ENCODE measurements at regions of chr20 and their contacts with region 1.

Region 1: GRCh38 chr20:15081261-15081660 is 743.8 kb upstream of the FLRT3 start:
- DNase-seq: no peak
- ATAC-seq: no peak
- H3K4me3 ChIP-seq: no peak overlapping the region
- H3K27ac ChIP-seq: no peak overlapping the region
- H3K4me1 ChIP-seq: no peaks in the 10 kb centered on the region
- H3K27me3 ChIP-seq: no peaks in the 10 kb centered on the region
- CTCF ChIP-seq: no peak
- POLR2A ChIP-seq: no peak
- RAD21 ChIP-seq: no peak

Region 2: DNA sequence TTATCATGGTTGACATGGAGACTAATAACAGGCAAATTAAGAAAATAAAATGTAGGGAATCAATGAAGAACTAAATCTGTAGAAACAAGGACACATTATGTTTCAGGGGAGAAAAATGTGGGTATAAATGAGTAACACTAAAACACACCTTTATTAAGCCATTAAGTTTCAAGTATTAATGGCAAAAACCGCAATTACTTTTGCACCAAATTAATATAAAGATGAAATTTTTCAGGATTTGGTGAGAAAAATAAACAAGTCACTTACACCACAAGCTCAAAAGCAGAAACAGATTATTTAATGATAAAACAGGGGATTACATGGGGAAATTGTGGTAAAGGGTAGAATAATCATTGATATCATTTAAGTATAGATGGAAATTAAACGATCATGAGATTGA is 49.9 kb after region 1 on chr20:
- CTCF ChIA-PET with region 1: no interaction called
- POLR2A ChIA-PET with region 1: no interaction called
- dilution Hi-C with region 1: no loop called
- in situ Hi-C with region 1: no loop called
- intact Hi-C with region 1: no loop called
- DNase-seq: no peak
- ATAC-seq: no peak
- H3K4me3 ChIP-seq: no peak overlapping the region
- H3K27ac ChIP-seq: no peak overlapping the region
- H3K4me1 ChIP-seq: no peaks in the 10 kb centered on the region
- H3K27me3 ChIP-seq: no peaks in the 10 kb centered on the region
- CTCF ChIP-seq: no peak
- POLR2A ChIP-seq: no peak
- RAD21 ChIP-seq: no peak

Region 3: DNA sequence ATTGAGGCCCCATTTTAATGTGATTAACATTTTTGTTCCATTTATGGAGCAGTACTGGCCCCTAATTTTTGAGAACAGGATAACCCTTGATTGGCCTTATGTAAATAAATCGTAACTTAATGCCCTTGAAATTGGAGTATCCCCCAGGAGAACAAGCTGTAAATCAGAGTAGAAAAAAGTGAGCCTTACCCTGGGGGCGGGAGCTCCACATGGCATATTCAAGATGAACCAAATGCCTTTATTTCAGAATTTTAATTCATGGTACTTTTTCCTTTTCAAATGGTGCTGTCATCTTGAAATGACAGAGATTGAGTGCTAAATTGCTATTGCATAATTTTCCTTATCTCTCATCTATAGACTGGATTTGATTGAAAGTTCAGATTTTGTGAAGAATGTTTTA is 65.7 kb after region 1 on chr20:
- CTCF ChIA-PET with region 1: no interaction called
- POLR2A ChIA-PET with region 1: no interaction called
- dilution Hi-C with region 1: no loop called
- in situ Hi-C with region 1: no loop called
- intact Hi-C with region 1: no loop called
- DNase-seq: no peak
- ATAC-seq: no peak
- H3K4me3 ChIP-seq: no peak overlapping the region
- H3K27ac ChIP-seq: no peak overlapping the region
- H3K4me1 ChIP-seq: no peaks in the 10 kb centered on the region
- H3K27me3 ChIP-seq: no peaks in the 10 kb centered on the region
- CTCF ChIP-seq: no peak
- POLR2A ChIP-seq: no peak
- RAD21 ChIP-seq: no peak

Region 4: DNA sequence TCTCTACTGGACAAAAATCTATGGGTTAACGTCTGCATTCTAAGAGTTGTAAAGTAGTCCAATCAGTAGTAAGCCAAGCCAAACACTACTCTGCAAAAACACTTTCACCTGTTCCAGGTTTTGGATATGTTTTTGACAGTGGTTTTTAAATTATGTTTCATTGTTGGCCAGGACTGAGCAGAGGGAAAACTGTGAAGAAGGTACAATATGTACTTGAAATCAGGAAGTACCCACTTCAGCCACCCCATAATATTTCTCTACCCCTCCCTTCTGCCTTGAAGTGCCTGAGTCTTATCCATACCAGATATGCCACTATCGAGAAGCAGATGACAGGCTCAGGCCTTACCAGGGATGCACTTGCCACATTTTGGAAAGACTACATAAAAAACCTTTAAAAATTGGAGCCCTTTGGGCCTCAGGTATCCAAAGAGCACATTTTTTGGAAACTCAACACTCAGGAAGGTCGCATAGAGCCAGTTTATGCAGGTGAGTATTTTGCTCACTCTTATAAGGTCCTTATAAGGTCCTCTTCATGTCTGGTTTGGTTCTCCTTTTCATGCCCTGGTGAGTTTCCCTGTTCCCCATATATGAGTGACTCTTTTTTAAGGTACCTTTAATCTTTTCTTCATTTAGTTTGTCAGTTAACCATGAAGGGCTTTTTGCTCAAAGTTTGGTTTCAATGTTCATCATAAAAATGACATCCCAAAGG is 115.4 kb after region 1 on chr20:
- CTCF ChIA-PET with region 1: no interaction called
- POLR2A ChIA-PET with region 1: no interaction called
- dilution Hi-C with region 1: no loop called
- in situ Hi-C with region 1: no loop called
- intact Hi-C with region 1: no loop called
- DNase-seq: no peak
- ATAC-seq: no peak
- H3K4me3 ChIP-seq: no peak overlapping the region
- H3K27ac ChIP-seq: no peak overlapping the region
- H3K4me1 ChIP-seq: no peaks in the 10 kb centered on the region
- H3K27me3 ChIP-seq: no peaks in the 10 kb centered on the region
- CTCF ChIP-seq: no peak
- POLR2A ChIP-seq: no peak
- RAD21 ChIP-seq: no peak

Region 5: GRCh38 chr20:15236812-15237211 is 155.6 kb after region 1 on chr20:
- CTCF ChIA-PET with region 1: no interaction called
- POLR2A ChIA-PET with region 1: no interaction called
- dilution Hi-C with region 1: no loop called
- in situ Hi-C with region 1: no loop called
- intact Hi-C with region 1: no loop called
- DNase-seq: peak; percentile 5
- ATAC-seq: no peak
- H3K4me3 ChIP-seq: no peak overlapping the region
- H3K27ac ChIP-seq: no peak overlapping the region
- H3K4me1 ChIP-seq: no peaks in the 10 kb centered on the region
- H3K27me3 ChIP-seq: no peaks in the 10 kb centered on the region
- CTCF ChIP-seq: 0 out of 2 replicates have a peak, but pooled peaks have one; percentile 20
- POLR2A ChIP-seq: no peak
- RAD21 ChIP-seq: no peak

Region 6: GRCh38 chr20:15387228-15387627 is 306.0 kb after region 1 on chr20:
- CTCF ChIA-PET with region 1: no interaction called
- POLR2A ChIA-PET with region 1: interaction called, 25 read pairs
- dilution Hi-C with region 1: no loop called
- in situ Hi-C with region 1: no loop called
- intact Hi-C with region 1: no loop called
- DNase-seq: no peak
- ATAC-seq: no peak
- H3K4me3 ChIP-seq: no peak overlapping the region
- H3K27ac ChIP-seq: no peak overlapping the region
- H3K4me1 ChIP-seq: no peaks in the 10 kb centered on the region
- H3K27me3 ChIP-seq: no peaks in the 10 kb centered on the region
- CTCF ChIP-seq: no peak
- POLR2A ChIP-seq: no peak
- RAD21 ChIP-seq: no peak

Measured in IMR-90 (cell line).